ENCODE measurements at regions of chr6 and their contacts with region 1.

Region 1: DNA sequence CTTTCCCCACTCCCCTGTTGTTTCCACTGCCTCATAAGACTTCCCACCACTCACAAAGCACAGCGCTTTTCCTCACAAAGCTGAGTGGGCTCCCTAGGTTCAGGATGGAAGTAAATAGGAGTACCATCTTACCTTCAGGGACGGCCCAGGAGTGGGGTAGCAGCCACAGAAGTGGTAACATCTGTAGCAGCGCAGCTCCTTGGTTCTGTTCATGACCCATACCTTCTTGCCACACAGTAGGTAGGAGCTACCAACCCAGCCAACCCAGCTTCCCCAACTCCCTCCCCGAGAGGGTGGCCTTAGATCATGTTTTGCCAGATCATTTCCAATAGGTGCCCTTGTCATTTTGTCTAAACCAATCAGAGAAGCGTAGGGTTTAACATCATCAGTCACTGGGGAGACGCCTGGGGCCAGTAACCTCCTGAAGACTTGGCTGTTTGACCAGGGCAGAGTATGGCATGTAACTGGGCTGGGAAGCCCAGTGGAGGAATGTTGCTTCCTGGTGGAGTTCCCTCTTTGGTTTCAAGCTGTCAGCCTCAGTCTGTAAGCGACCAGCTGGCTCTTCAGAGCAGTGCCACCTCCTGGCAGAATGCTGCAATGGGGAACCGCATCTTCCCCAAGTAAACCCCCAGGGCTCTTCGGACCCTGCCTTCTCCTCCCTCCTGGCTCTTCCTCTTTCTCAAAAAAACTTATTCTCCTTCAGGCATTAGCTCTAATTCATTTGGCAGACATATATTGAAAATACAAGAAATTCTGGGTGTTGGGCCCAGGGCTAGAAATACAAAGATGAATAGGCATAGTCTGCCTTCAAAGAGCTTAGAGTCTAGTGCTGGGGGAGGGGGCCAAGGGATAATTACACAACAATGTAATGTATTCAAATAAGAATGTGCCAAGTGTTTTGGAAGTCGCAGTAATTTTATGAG is at the start of gene HLA-DMA:
- DNase-seq: peak; percentile 81
- ATAC-seq: peak; percentile 97
- H3K4me3 Mint-ChIP-seq: peak within 1 kb of the TSS; percentile 68
- H3K27ac Mint-ChIP-seq: peak within 1 kb of the TSS; percentile 76
- H3K4me1 Mint-ChIP-seq: peaks cover 56% of the 10 kb centered on the region
- H3K27me3 Mint-ChIP-seq: no peaks in the 10 kb centered on the region
- total RNA-seq, gene HLA-DMA: 11.8 TPM

Region 2: GRCh38 chr6:32838114-32838958 is 114.7 kb before region 1 on chr6 and contains the start of gene TAP2:
- CTCF ChIA-PET with region 1: interaction called, 17 read pairs
- POLR2A ChIA-PET with region 1: no interaction called
- intact Hi-C with region 1: no loop called
- DNase-seq: peak; percentile 99
- ATAC-seq: peak; percentile 82
- H3K4me3 Mint-ChIP-seq: peak within 1 kb of the TSS; percentile 95
- H3K27ac Mint-ChIP-seq: peak within 1 kb of the TSS; percentile 94
- H3K4me1 Mint-ChIP-seq: peaks cover 79% of the 10 kb centered on the region
- H3K27me3 Mint-ChIP-seq: no peaks in the 10 kb centered on the region
- total RNA-seq, gene TAP2: 96.4 to 150 TPM

Region 3: GRCh38 chr6:32879691-32880090 is 73.4 kb before region 1 on chr6:
- CTCF ChIA-PET with region 1: interaction called, 10 read pairs
- POLR2A ChIA-PET with region 1: interaction called, 8 read pairs
- intact Hi-C with region 1: loop called in 1 of 2 experiments (anchors 2 kb)
- DNase-seq: no peak
- ATAC-seq: no peak
- H3K4me3 Mint-ChIP-seq: no peak overlapping the region
- H3K27ac Mint-ChIP-seq: no peak overlapping the region
- H3K4me1 Mint-ChIP-seq: peaks cover 15% of the 10 kb centered on the region
- H3K27me3 Mint-ChIP-seq: peaks cover 5% of the 10 kb centered on the region

Region 4: DNA sequence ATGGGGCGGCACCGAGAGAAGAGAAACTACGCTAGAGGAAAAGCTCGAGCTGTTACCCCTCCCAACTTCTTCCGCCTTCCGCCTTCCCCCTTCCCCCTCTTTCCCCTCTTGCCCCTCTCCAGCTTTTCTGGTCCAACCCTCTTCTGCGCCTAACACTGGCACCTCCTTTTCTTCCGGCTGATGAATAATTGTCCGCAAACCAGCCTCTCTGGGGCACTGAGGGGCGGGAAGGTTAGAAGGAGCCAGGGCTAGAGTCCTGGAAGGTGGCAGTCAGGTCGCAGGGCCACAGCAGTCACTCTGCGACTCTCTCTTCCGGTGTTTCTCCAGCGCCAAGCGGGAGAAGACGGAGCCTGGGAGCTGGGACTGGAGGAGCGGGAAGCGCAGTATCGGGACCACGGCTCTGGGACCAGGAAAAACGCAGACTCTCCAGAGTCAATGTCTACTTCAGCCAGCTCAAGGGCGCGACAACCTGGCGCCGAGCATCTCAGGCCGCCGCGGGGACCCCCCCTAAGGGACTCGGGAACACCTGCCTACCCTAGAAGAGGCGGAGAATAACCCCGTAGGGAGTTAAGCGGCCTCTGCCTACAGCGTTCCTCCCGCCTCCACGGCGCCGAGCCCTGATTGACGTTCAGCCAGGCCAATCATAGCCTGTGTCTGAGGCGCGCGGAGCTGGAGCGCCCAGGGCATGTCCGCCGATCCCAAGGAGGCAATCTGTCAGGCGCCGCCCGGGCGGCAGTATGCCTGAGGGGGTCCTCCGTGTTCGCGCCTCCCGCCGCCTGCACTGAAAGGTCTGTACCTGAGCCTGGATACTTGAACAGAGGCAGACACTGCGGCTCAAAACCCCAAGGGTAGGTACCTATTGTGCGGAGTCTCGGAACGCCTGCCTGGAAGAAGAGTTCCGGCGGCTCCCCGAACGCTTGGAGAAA is 58.7 kb before region 1 on chr6:
- CTCF ChIA-PET with region 1: interaction called, 8 read pairs
- POLR2A ChIA-PET with region 1: interaction called, 3 read pairs
- intact Hi-C with region 1: loop called in 1 of 2 experiments (anchors 2 kb)
- DNase-seq: peak; percentile 96
- ATAC-seq: peak; percentile 99
- H3K4me3 Mint-ChIP-seq: peak overlapping the region; percentile 93
- H3K27ac Mint-ChIP-seq: peak overlapping the region; percentile 94
- H3K4me1 Mint-ChIP-seq: peaks cover 25% of the 10 kb centered on the region
- H3K27me3 Mint-ChIP-seq: no peaks in the 10 kb centered on the region

Region 5: DNA sequence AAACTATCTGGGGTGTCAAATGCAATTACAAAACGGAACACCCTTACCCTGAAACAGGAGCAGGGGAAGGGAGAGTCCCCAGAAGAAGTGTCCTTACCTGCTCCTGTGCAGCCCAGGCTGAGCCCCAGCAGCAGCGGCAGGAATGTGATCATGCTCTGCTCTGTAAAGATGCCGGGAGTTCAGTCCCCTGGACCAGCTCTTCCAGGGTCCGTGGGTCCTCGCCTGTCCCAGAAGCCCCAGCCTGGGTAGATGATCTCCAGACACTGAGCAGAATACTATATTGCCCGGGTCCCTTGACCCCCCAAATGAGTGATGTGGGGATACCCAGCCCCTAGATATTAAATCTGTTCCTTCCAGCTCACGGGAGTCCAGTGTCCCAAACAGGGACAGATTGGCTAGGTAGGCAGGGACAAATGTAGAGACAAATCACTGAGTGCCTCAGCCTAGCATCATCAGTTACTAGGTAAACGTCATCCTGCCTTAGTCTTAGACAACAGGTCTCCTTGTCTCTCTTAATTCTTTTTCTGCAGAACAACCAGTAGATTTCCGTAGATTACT is 12.3 kb before region 1 on chr6 and contains the start of gene HLA-DMB:
- CTCF ChIA-PET with region 1: interaction called, 137 read pairs
- POLR2A ChIA-PET with region 1: interaction called, 18 read pairs
- intact Hi-C with region 1: loop called in 1 of 2 experiments (anchors 1 kb)
- DNase-seq: peak; percentile 58
- ATAC-seq: peak; percentile 87
- H3K4me3 Mint-ChIP-seq: peak within 1 kb of the TSS; percentile 72
- H3K27ac Mint-ChIP-seq: peak within 1 kb of the TSS; percentile 87
- H3K4me1 Mint-ChIP-seq: peaks cover 55% of the 10 kb centered on the region
- H3K27me3 Mint-ChIP-seq: no peaks in the 10 kb centered on the region
- total RNA-seq, gene HLA-DMB: 1.9 to 2.3 TPM

Measured in activated CD4-positive, alpha-beta T cell treated with anti-CD3 and anti-CD28 coated beads for 36 hours (primary cell).